ENCODE measurements at regions of chr9 and their contacts with region 1.

Region 1: DNA sequence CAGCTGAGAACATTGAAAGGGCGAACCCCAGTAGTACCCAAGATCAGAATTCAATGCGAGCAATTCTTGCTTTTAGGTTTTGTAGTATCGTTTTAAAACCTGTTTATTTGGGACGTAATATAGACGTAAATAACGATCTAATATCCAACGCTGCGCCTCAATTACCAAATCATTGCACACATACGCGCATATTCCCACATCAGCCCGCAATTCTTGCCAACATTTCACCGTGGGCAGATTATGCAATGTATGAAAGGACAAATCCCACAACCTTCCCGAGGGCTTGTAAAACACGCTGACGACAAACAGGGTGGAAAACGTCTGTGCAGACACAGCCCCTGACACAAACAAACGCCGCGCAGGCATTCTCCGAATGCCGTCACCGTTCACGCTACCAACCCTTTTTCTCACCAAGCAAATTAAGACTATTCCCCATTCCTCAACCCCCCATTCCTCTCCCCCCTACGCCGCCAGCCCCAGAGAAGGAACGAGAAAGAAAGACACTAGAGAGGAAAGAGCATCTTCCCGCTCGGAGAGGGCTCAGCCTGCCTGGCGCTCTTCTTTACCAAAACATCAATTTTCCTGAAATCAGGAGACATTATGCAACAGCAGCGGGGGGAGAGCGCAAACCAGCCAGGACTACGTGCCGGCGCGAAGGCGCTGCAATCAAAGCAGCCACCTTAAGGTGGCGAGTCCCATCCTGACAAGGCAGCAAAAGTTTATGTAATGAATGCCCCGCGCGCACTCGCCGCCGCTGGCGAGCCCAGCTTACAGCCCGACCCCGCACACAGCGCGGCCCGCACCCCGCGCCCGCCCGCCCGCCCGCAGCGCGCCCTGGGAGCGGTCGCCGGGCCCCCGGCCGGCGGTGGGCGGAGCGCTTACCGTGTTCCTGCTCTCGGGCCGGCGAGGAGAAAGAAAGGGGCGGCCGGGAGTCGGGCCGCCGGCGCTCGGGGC is 597 bp downstream of the NFIL3 start:
- DNase-seq: peak in 3 of 4 experiments; percentile 18 to 74 (median 54)
- ATAC-seq: peak; percentile 38
- H3K4me3 ChIP-seq: peak overlapping the region; percentile 77
- H3K27ac ChIP-seq: peak overlapping the region; percentile 70; the same call in 2 of the 3 replicates
- H3K4me1 ChIP-seq: peaks cover 19 to 36% of the 10 kb centered on the region in 2 experiments
- H3K27me3 ChIP-seq: peaks cover 3 to 14% of the 10 kb centered on the region in 2 experiments; a peak in 3 of 5 replicates
- CTCF ChIP-seq: peak in 2 of 3 experiments; percentile 19 to 22; a peak in 1 of 6 replicates
- EP300 ChIP-seq: no peak
- POLR2A ChIP-seq: no peak
- RAD21 ChIP-seq: no peak

Region 2: GRCh38 chr9:91036826-91037510 is 386.1 kb before region 1 on chr9:
- CTCF ChIA-PET with region 1: interaction called, 4 read pairs
- POLR2A ChIA-PET with region 1: interaction called, 4 read pairs
- in situ Hi-C with region 1: loop called (anchors 5 kb)
- intact Hi-C with region 1: loop called (anchors 1 kb)
- DNase-seq: peak; percentile 63 to 84 (median 70)
- ATAC-seq: peak; percentile 100
- H3K4me3 ChIP-seq: no peak overlapping the region
- H3K27ac ChIP-seq: no peak overlapping the region
- H3K4me1 ChIP-seq: peaks cover 5 to 10% of the 10 kb centered on the region in 2 experiments; a peak in 3 of 5 replicates
- H3K27me3 ChIP-seq: peaks cover 2 to 43% of the 10 kb centered on the region in 2 experiments; a peak in 3 of 5 replicates
- CTCF ChIP-seq: peak; percentile 67 to 75 (median 68)
- EP300 ChIP-seq: 0 out of 2 replicates have a peak, but pooled peaks have one; percentile 33
- POLR2A ChIP-seq: no peak
- RAD21 ChIP-seq: peak; percentile 84 to 87

Region 3: DNA sequence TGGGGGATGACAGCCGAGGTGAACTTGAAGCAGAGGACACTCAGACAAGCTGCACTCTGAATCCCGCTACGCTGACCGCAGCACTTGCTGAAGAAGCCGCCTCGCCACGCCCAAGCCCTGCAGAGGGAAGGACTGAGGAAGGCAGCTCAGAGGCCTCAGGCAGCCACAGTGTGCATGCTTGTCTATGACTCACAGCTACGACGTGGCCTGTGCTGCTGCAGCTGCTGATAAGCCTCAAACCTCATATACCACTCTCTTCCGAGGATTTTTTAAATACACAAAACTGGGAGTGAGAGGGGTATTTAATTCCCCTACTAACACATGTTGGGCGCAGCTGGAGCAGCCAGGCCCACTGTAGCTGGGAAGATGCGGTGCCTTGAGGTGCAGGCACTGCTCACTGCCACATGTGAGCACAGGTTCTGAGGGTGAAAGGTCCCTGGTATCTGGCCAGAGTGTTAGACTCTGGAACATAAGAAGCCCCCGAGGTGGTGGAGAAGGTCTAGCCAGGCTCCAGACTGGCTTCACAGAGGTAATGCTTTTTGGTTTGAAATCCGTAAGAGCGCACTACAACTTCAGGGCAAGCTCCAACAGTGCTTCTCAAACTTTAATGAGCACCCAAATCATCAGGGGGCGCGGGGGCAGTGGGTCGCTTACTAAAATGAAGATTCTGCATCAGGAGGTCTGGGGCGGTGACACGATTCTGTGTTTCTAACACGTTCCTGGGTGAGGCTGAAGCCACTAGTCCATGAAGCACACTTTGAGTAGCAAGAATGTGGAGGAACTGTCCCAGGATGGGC is 258.1 kb before region 1 on chr9:
- CTCF ChIA-PET with region 1: interaction called, 6 read pairs
- POLR2A ChIA-PET with region 1: no interaction called
- in situ Hi-C with region 1: no loop called
- intact Hi-C with region 1: loop called (anchors 10 kb)
- DNase-seq: peak; percentile 73 to 95 (median 81)
- ATAC-seq: peak; percentile 99
- H3K4me3 ChIP-seq: no peak overlapping the region; the same call in 1 of the 2 replicates
- H3K27ac ChIP-seq: peak overlapping the region; percentile 66; the same call in 2 of the 3 replicates
- H3K4me1 ChIP-seq: peaks cover 33 to 38% of the 10 kb centered on the region in 2 experiments
- H3K27me3 ChIP-seq: no peaks in the 10 kb centered on the region
- CTCF ChIP-seq: no peak
- EP300 ChIP-seq: peak; percentile 85
- POLR2A ChIP-seq: no peak
- RAD21 ChIP-seq: peak; percentile 11 to 22; a peak in 1 of 4 replicates

Region 4: GRCh38 chr9:91273853-91274552 is 149.0 kb before region 1 on chr9:
- CTCF ChIA-PET with region 1: no interaction called
- POLR2A ChIA-PET with region 1: no interaction called
- in situ Hi-C with region 1: no loop called
- intact Hi-C with region 1: loop called (anchors 10 kb)
- DNase-seq: peak in 3 of 4 experiments; percentile 16 to 17 (median 17)
- ATAC-seq: no peak
- H3K4me3 ChIP-seq: no peak overlapping the region
- H3K27ac ChIP-seq: no peak overlapping the region
- H3K4me1 ChIP-seq: no peaks in the 10 kb centered on the region; a peak in 2 of 5 replicates
- H3K27me3 ChIP-seq: no peaks in the 10 kb centered on the region
- CTCF ChIP-seq: no peak
- EP300 ChIP-seq: no peak
- POLR2A ChIP-seq: no peak
- RAD21 ChIP-seq: no peak

Region 5: DNA sequence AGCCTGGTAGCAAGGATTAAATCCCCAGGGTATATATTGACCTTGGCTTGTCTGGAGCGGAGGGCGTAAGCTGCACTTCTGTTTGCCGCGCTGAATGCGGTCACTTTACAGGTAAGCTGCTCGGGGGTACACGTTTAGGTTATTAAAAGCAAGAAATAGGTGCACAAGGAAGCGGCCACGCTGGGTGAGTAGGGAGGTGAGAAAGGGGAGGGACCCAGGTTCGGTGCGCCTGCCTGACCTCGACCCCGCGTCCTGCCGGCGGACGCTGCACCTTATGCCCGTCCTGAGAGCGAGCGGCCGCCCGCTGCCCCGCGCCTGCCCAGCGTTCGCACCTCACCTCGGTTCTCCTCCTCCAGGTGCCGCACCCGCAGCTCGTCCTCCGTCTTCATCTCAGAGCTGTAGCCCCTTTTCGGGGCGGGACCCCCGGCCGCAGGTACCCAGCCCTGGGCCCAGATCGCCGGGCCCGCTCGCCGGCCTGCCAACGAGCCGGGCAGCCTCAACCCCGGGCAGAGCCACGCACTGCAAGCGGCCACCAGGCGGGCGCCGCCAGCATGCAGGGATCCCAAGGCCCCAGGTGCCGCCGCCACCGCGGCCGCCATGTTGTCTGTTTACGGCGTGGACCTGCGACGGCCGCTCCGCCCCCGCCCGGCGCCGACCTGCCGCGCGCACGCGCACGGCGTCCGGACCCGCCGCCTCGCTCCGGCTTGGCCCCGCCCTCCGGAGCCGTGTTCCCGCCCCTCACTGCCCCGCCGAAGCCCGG is 61.6 kb before region 1 on chr9 and contains the start of gene AUH:
- CTCF ChIA-PET with region 1: interaction called, 7 read pairs
- POLR2A ChIA-PET with region 1: interaction called, 12 read pairs
- in situ Hi-C with region 1: loop called (anchors 5 kb)
- intact Hi-C with region 1: loop called (anchors 1 kb)
- DNase-seq: peak; percentile 91 to 97 (median 96)
- ATAC-seq: peak; percentile 95
- H3K4me3 ChIP-seq: peak within 1 kb of the TSS; percentile 96
- H3K27ac ChIP-seq: peak within 1 kb of the TSS; percentile 93
- H3K4me1 ChIP-seq: peaks cover 13 to 15% of the 10 kb centered on the region in 2 experiments; a peak in 3 of 5 replicates
- H3K27me3 ChIP-seq: no peaks in the 10 kb centered on the region
- CTCF ChIP-seq: no peak
- EP300 ChIP-seq: no peak
- POLR2A ChIP-seq: peak; percentile 81
- RAD21 ChIP-seq: no peak
- polyA plus RNA-seq, gene AUH: 3.4 to 4.5 TPM

Region 6: GRCh38 chr9:91411096-91411771 is 11.8 kb before region 1 on chr9:
- CTCF ChIA-PET with region 1: no interaction called
- POLR2A ChIA-PET with region 1: interaction called, 11 read pairs
- in situ Hi-C with region 1: no loop called
- intact Hi-C with region 1: no loop called
- DNase-seq: no peak
- ATAC-seq: no peak
- H3K4me3 ChIP-seq: no peak overlapping the region
- H3K27ac ChIP-seq: no peak overlapping the region
- H3K4me1 ChIP-seq: no peaks in the 10 kb centered on the region
- H3K27me3 ChIP-seq: no peaks in the 10 kb centered on the region
- CTCF ChIP-seq: no peak
- EP300 ChIP-seq: no peak
- POLR2A ChIP-seq: no peak
- RAD21 ChIP-seq: no peak